CD8-positive, alpha-beta memory T cell (primary cell): ENCODE measurements at regions of chr11 and their contacts with region 1.

Region 1: GRCh38 chr11:119323538-119324033 is 6.7 kb upstream of the MCAM start:
- DNase-seq: peak; percentile 56 to 83 (median 70)
- H3K4me3 ChIP-seq: no peak overlapping the region
- H3K4me3 Mint-ChIP-seq: peak overlapping the region in 2 of 7 donors; percentile 51 to 52
- H3K27ac ChIP-seq: no peak overlapping the region
- H3K27ac Mint-ChIP-seq: peak overlapping the region in 2 of 8 donors; percentile 22 to 38
- H3K4me1 ChIP-seq: peaks cover 14% of the 10 kb centered on the region
- H3K4me1 Mint-ChIP-seq: peaks cover 9 to 26% (median 16%) of the 10 kb centered on the region in 3 donors
- H3K27me3 ChIP-seq: no peaks in the 10 kb centered on the region
- H3K27me3 Mint-ChIP-seq: peaks cover 4 to 12% of the 10 kb centered on the region in 2 donors

Region 2: GRCh38 chr11:119205574-119206510 is 117.7 kb before region 1 on chr11 and contains the start of gene CBL:
- CTCF ChIA-PET with region 1: interaction called, 12 read pairs
- POLR2A ChIA-PET with region 1: interaction called, 5 read pairs
- DNase-seq: peak; percentile 89 to 97 (median 96)
- H3K4me3 ChIP-seq: peak within 1 kb of the TSS; percentile 79
- H3K4me3 Mint-ChIP-seq: peak within 1 kb of the TSS; percentile 91 to 99 (median 98)
- H3K27ac ChIP-seq: peak within 1 kb of the TSS; percentile 54
- H3K27ac Mint-ChIP-seq: peak within 1 kb of the TSS; percentile 83 to 97 (median 94)
- H3K4me1 ChIP-seq: peaks cover 31% of the 10 kb centered on the region
- H3K4me1 Mint-ChIP-seq: peaks cover 31 to 45% (median 37%) of the 10 kb centered on the region in 3 donors
- H3K27me3 ChIP-seq: no peaks in the 10 kb centered on the region
- H3K27me3 Mint-ChIP-seq: peaks cover 0 to 2% of the 10 kb centered on the region in 2 donors
- total RNA-seq, gene CBL: 25.9 to 26.1 TPM

Region 3: GRCh38 chr11:119262668-119263351 is 60.8 kb before region 1 on chr11:
- CTCF ChIA-PET with region 1: interaction called, 11 read pairs
- POLR2A ChIA-PET with region 1: no interaction called
- DNase-seq: no peak
- H3K4me3 ChIP-seq: peak overlapping the region; percentile 17
- H3K4me3 Mint-ChIP-seq: no peak overlapping the region
- H3K27ac ChIP-seq: no peak overlapping the region
- H3K27ac Mint-ChIP-seq: no peak overlapping the region
- H3K4me1 ChIP-seq: peaks cover 84% of the 10 kb centered on the region
- H3K4me1 Mint-ChIP-seq: peaks cover 50 to 52% (median 51%) of the 10 kb centered on the region in 3 donors
- H3K27me3 ChIP-seq: no peaks in the 10 kb centered on the region
- H3K27me3 Mint-ChIP-seq: no peaks in the 10 kb centered on the region

Region 4: GRCh38 chr11:119284344-119285157 is 39.0 kb before region 1 on chr11:
- CTCF ChIA-PET with region 1: interaction called, 11 read pairs
- POLR2A ChIA-PET with region 1: no interaction called
- DNase-seq: peak in 2 of 5 donors; percentile 49 to 62
- H3K4me3 ChIP-seq: no peak overlapping the region
- H3K4me3 Mint-ChIP-seq: no peak overlapping the region
- H3K27ac ChIP-seq: no peak overlapping the region
- H3K27ac Mint-ChIP-seq: peak overlapping the region in 7 of 8 donors; percentile 5 to 66 (median 31)
- H3K4me1 ChIP-seq: peaks cover 14% of the 10 kb centered on the region
- H3K4me1 Mint-ChIP-seq: peaks cover 18 to 26% (median 25%) of the 10 kb centered on the region in 3 donors
- H3K27me3 ChIP-seq: no peaks in the 10 kb centered on the region
- H3K27me3 Mint-ChIP-seq: no peaks in the 10 kb centered on the region

Region 5: DNA sequence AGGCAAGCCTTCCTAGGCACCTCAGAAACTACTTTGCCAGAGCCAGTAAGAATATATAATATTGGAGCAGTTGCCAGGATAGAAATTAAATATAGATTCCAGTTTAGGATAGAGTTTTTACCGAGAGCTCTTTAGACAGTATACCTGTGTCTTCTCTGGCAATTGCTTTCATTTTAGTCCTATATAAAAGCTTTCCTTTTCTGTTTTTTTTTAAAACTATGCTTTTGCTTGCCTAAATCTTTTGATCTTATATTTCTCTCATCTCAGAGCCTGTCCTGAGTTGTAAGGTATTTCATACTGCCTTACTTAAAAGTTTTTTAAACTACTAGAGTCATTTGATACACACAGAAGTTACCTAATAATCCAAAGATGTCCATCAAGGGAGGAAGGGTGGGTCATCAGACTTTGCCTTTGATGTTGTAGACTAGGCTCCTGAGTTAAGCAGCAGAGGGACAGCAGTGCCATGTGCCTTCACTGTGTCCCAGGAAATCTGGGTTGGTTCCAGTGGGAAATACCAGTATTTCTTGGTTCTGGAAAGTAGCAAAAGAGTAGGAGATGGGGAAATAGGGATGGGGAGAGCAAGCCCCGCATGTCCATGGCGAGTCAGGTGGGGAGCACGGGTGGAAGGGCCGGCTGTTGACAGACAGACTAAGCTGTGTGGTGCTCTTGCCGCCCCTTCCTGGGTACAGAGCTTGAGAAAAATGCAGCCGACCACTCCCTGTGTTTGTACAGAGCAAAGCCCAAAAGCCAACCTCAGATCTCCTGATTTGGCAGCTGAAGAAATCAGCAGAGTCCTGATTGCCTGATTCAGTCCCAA is 17.8 kb before region 1 on chr11:
- CTCF ChIA-PET with region 1: interaction called, 10 read pairs
- POLR2A ChIA-PET with region 1: interaction called, 3 read pairs
- DNase-seq: peak in 1 of 5 donors; percentile 52
- H3K4me3 ChIP-seq: peak overlapping the region; percentile 34
- H3K4me3 Mint-ChIP-seq: no peak overlapping the region
- H3K27ac ChIP-seq: no peak overlapping the region
- H3K27ac Mint-ChIP-seq: peak overlapping the region in 7 of 8 donors; percentile 39 to 86 (median 66)
- H3K4me1 ChIP-seq: peaks cover 28% of the 10 kb centered on the region
- H3K4me1 Mint-ChIP-seq: peaks cover 0 to 10% (median 8%) of the 10 kb centered on the region in 3 donors
- H3K27me3 ChIP-seq: no peaks in the 10 kb centered on the region
- H3K27me3 Mint-ChIP-seq: peaks cover 0 to 2% of the 10 kb centered on the region in 2 donors

Region 6: DNA sequence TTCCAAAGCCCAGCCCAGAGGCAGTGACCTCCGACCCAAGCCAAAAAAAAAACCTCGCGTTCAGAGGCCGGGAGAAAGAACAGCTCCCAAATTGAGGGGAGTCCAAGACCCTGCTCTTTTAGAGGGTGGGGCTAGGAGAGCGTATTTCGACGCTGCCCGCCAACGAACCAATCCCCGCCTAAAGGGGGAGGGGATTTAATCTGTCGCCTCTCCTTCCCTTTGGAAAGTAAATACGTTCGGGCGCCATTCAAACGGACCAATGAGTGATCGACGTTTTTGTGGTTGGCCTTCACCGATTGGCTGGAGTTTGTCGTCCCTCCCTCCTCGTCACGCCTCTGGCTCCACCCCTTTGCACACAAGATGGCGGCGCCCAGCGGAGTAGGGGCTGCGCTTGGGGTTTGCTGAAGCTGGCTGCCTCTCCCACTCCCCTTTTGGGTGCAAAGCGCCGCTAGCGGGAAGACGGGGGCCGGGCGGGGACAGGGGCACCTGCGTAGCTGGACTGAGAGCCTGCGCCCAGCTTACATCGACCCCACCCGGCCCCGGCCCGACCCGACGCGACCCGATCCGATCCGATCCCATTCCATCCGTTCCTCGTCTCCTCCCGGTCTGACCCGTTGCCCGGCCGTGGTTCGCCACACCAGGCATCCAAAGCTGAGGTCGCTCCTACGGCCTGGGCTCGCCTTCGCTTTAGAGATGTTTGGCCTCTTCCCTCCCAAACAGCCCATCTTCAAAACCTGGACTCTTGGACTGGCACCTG is 10.8 kb after region 1 on chr11 and contains the start of gene RNF26:
- CTCF ChIA-PET with region 1: interaction called, 23 read pairs
- POLR2A ChIA-PET with region 1: interaction called, 4 read pairs
- DNase-seq: peak; percentile 88 to 95 (median 93)
- H3K4me3 ChIP-seq: peak within 1 kb of the TSS; percentile 88
- H3K4me3 Mint-ChIP-seq: peak within 1 kb of the TSS; percentile 90 to 100 (median 98)
- H3K27ac ChIP-seq: peak within 1 kb of the TSS; percentile 79
- H3K27ac Mint-ChIP-seq: peak within 1 kb of the TSS; percentile 90 to 99 (median 98)
- H3K4me1 ChIP-seq: peaks cover 14% of the 10 kb centered on the region
- H3K4me1 Mint-ChIP-seq: peaks cover 26 to 52% (median 45%) of the 10 kb centered on the region in 3 donors
- H3K27me3 ChIP-seq: peaks cover 10% of the 10 kb centered on the region
- H3K27me3 Mint-ChIP-seq: peaks cover 12 to 17% of the 10 kb centered on the region in 2 donors
- total RNA-seq, gene RNF26: 33.2 to 34.8 TPM

Region 7: DNA sequence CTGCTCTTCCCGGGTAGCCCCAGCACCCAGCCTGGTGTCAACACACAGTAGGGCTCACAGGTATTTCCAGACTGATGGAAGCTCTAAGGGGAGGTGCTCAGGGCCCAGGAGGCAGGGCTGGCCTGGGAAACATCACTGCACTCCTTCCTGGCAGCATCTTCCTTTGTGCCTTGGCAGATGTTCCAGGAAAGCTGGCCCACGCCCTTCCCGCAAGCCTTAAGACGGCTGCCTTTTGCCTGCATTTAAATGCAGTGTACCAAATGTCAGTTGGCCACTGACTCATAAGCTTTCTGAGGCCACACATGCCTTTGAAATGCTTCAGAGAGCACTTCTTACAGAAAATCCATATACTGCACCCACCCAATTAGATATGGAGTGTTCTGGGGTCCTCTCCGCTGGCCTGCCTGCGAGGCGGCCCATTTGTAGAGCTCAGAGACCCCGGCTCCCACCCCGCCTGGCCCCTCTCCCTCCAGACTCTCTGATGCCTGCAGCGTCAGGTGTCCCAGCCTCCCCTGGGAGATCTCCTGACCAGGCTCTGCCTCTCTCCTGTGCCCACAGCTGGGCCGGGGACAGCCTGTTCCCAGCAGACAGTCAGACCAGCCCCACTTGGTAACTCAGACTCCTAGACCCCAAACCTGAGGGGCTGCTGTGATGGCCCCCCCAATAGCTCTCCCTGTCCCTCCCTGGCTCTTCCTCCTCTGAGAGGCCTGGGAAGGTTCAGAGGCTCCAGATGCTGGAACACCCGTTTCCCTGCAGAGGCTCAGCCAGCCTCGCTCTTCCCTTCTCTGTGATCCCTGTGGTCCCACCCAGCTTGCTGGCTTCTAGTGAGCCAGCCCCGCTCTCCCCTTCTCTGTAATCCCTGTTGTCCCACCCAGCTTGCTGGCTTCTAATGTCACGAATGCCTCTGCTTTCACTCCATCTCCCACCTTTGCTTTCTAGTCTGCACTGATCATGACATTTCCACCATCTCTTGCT is 147.0 kb after region 1 on chr11:
- CTCF ChIA-PET with region 1: no interaction called
- POLR2A ChIA-PET with region 1: no interaction called
- DNase-seq: no peak
- H3K4me3 ChIP-seq: no peak overlapping the region
- H3K4me3 Mint-ChIP-seq: no peak overlapping the region
- H3K27ac ChIP-seq: no peak overlapping the region
- H3K27ac Mint-ChIP-seq: no peak overlapping the region
- H3K4me1 ChIP-seq: no peaks in the 10 kb centered on the region
- H3K4me1 Mint-ChIP-seq: no peaks in the 10 kb centered on the region
- H3K27me3 ChIP-seq: peaks cover 5% of the 10 kb centered on the region
- H3K27me3 Mint-ChIP-seq: peaks cover 17 to 76% of the 10 kb centered on the region in 2 donors